ENCODE measurements at regions of chr10 and their contacts with region 1.

Region 1: DNA sequence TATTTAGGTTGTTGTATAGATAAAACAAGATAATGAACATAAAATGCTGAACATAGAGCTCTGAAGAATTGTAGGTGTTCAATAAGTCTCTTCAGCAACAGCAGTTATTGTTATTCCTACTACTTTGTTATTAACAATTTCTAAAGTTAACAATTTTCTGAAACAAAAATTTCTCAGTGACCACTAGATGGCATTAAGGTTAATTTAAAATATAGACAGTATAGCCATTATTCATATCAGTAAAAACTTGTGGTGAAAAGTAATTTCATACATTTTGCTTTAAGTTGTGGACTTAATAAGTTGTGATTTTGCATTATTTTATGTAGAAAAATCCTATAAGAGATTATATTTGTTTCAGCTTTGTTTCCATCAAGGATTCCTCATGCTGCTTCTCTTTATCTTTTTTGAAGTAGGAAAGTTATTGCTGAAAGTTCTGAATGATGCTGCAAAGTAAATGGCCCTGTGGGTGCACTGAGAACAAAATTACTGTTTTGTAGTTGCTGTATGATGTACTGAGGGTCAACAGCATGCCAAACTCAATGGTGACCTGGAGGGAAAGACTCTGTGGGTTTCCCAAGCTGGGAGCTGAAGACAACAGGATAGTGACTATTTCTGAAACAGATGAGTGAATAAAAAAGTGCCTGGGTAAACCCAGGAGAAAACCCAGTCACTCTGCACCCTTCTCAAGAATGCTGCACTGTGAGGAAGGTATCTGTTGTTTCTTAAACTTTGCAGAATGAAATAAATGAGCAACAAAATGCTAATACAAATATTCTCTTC is 253.6 kb downstream of the KIF20B start:
- DNase-seq: no peak
- H3K4me3 ChIP-seq: no peak overlapping the region
- H3K27ac ChIP-seq: no peak overlapping the region
- H3K27me3 ChIP-seq: peaks cover 0 to 2% (median 0%) of the 10 kb centered on the region in 45 donors
- CTCF ChIP-seq: peak in 55 of 56 donors; percentile 33 to 71 (median 54)

Region 2: GRCh38 chr10:89609833-89610346 is 345.1 kb before region 1 on chr10:
- intact Hi-C with region 1: no loop called
- DNase-seq: no peak
- H3K4me3 ChIP-seq: no peak overlapping the region
- H3K27ac ChIP-seq: no peak overlapping the region
- H3K27me3 ChIP-seq: no peaks in the 10 kb centered on the region
- CTCF ChIP-seq: no peak

Region 3: GRCh38 chr10:89805599-89806013 is 149.4 kb before region 1 on chr10:
- intact Hi-C with region 1: no loop called
- DNase-seq: no peak
- H3K4me3 ChIP-seq: no peak overlapping the region
- H3K27ac ChIP-seq: peak overlapping the region in 1 of 59 donors; percentile 9
- H3K27me3 ChIP-seq: peaks cover 0 to 3% (median 0%) of the 10 kb centered on the region in 45 donors
- CTCF ChIP-seq: no peak

Region 4: GRCh38 chr10:90138844-90139243 is 183.9 kb after region 1 on chr10:
- intact Hi-C with region 1: loop called in 1 of 2 experiments (anchors 5 kb)
- DNase-seq: no peak
- H3K4me3 ChIP-seq: no peak overlapping the region
- H3K27ac ChIP-seq: no peak overlapping the region
- H3K27me3 ChIP-seq: no peaks in the 10 kb centered on the region
- CTCF ChIP-seq: peak in 53 of 56 donors; percentile 16 to 70 (median 48)

Region 5: GRCh38 chr10:90787393-90788198 is 832.6 kb after region 1 on chr10:
- intact Hi-C with region 1: loop called in 1 of 2 experiments (anchors 10 kb)
- DNase-seq: no peak
- H3K4me3 ChIP-seq: no peak overlapping the region
- H3K27ac ChIP-seq: no peak overlapping the region
- H3K27me3 ChIP-seq: peaks cover 0 to 6% (median 0%) of the 10 kb centered on the region in 45 donors
- CTCF ChIP-seq: peak in 55 of 56 donors; percentile 43 to 77 (median 64)